Dendritic cell treated with granulocyte-macrophage colony-stimulating factor and Interleukin-4, amounts not matched to agents 40 ng/mL and 50 ng/mL, for 4 days (primary cell): ENCODE measurements at regions of chr1 and their contacts with region 1.

Region 1: DNA sequence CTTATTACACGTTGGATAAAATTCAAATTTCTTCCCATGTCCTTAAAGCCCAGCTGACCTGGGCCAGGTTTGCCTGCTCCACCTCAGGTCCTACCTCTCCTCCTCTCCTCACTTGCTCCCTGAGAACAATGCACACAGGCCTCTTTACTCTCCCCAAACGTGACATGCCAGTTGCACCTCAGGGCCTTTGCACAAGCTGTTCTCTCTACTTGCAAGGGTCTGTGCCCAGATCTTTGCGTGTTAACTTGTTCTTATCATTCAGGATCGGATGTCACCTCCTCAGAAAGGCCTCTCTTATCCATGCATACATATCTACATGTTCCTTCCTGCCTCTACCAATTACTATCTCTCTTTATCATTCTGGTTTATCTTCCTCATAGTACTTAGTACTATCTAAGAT is 14.7 kb upstream of the LEFTY1 start:
- H3K4me3 Mint-ChIP-seq: no peak overlapping the region
- H3K27ac Mint-ChIP-seq: no peak overlapping the region
- H3K4me1 Mint-ChIP-seq: no peaks in the 10 kb centered on the region
- H3K27me3 Mint-ChIP-seq: no peaks in the 10 kb centered on the region

Region 2: DNA sequence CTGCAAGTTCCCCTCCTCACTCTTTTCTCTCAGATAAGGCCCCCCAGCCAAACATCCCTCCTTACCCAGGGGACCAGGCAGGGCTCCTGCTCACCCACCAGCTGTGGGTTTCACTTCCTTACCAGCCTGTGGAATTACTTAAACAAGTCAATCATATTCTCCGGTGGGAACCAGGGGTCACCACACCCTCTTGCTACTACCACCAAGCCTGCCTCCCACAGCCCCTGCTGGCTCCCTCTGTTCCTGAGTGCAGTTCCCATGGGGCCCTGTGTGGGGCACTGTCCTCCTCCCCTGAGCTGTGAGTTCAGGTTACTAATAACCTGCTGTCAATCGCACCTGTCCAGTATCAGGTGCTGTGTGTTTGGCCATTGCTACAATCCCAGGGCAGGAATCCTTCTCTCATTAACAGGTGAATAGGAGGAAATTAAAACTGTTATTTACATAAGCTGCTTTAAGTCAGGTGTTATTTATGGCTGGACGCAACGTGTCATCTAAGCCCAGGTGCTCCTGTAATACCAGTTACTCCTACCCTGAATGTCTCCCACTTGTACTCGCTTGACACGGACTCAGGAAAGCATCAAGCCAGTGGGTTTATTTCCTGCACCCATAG is 422.7 kb before region 1 on chr1:
- intact Hi-C with region 1: loop called (anchors 5 kb)
- H3K4me3 Mint-ChIP-seq: no peak overlapping the region
- H3K27ac Mint-ChIP-seq: no peak overlapping the region
- H3K4me1 Mint-ChIP-seq: peaks cover 13% of the 10 kb centered on the region
- H3K27me3 Mint-ChIP-seq: peaks cover 8% of the 10 kb centered on the region